Breast epithelium (tissue), 4 donors: ENCODE measurements at regions of chr16 and their contacts with region 1.

Region 1: DNA sequence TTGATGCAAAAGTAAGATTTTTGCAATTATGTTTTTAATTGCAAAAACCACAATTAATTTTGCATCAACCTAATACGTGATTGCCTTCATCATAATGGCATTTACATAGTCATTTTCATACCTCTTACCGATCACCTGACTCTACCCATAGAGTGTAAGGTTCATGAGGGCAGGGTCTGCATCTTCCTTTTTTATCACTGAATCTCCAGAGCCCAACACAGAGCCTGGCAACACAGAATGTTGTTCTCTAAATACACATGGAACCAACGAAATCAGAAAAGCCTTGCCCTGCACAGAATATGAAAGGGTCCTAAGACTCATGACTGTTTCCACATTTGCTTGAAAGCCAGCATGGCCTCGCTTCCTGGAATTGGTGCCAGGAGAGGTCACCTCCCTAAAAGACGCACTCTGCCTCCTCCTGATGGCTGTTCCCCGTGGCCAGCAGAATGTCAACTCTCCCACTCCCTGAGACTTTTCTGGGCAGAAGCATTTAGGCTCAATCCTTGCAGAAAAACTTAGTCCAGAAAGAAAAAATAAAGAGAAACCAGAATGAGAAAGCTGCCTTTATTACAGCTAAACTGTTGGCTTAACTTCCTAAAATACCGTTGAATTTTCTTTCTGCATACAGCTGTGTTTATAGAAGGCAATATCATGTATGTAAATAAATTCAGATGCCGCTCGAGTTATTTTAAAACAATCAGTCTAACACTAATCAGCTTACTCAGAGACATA is 327.8 kb upstream of the MAF start:
- DNase-seq: no peak
- H3K4me3 ChIP-seq: no peak overlapping the region
- H3K27ac ChIP-seq: no peak overlapping the region
- H3K4me1 ChIP-seq: no peaks in the 10 kb centered on the region
- H3K27me3 ChIP-seq: no peaks in the 10 kb centered on the region
- CTCF ChIP-seq: no peak
- POLR2A ChIP-seq: no peak

Region 2: GRCh38 chr16:79912592-79913310 is 15.6 kb before region 1 on chr16:
- intact Hi-C with region 1: no loop called
- DNase-seq: no peak
- H3K4me3 ChIP-seq: no peak overlapping the region
- H3K27ac ChIP-seq: no peak overlapping the region
- H3K4me1 ChIP-seq: no peaks in the 10 kb centered on the region
- H3K27me3 ChIP-seq: no peaks in the 10 kb centered on the region
- CTCF ChIP-seq: no peak
- POLR2A ChIP-seq: no peak

Region 3: DNA sequence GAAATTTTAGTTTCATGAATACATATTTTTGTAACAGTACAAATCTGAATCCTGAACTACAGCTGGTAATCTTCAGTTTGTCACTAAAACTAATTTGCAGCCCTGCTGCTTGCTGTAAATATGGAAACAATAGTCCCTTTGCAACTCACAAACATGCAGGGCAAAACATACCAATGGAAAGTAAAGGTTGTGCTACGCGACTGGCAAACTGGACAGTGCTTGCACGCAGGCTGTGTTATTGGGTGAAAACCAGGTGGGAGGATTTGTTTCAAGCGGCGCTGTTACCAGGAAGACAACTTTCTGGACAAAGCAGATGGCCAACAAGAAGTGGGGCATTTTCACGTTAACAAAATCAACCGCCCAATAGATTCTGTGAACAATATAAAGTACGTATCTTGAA is 782.6 kb after region 1 on chr16:
- intact Hi-C with region 1: loop called (anchors 5 kb)
- DNase-seq: no peak
- H3K4me3 ChIP-seq: no peak overlapping the region
- H3K27ac ChIP-seq: no peak overlapping the region
- H3K4me1 ChIP-seq: no peaks in the 10 kb centered on the region
- H3K27me3 ChIP-seq: no peaks in the 10 kb centered on the region
- CTCF ChIP-seq: no peak
- POLR2A ChIP-seq: no peak